Activated CD4-positive, alpha-beta memory T cell treated with anti-CD3 and anti-CD28 coated beads for 36 hours (primary cell): ENCODE measurements at regions of chr20 and their contacts with region 1.

Region 1: GRCh38 chr20:57622579-57623377 is 2.6 kb upstream of the ZBP1 start:
- DNase-seq: peak; percentile 85
- H3K4me3 Mint-ChIP-seq: no peak overlapping the region
- H3K27ac Mint-ChIP-seq: peak overlapping the region; percentile 53
- H3K4me1 Mint-ChIP-seq: peaks cover 64% of the 10 kb centered on the region
- H3K27me3 Mint-ChIP-seq: peaks cover 2% of the 10 kb centered on the region

Region 2: DNA sequence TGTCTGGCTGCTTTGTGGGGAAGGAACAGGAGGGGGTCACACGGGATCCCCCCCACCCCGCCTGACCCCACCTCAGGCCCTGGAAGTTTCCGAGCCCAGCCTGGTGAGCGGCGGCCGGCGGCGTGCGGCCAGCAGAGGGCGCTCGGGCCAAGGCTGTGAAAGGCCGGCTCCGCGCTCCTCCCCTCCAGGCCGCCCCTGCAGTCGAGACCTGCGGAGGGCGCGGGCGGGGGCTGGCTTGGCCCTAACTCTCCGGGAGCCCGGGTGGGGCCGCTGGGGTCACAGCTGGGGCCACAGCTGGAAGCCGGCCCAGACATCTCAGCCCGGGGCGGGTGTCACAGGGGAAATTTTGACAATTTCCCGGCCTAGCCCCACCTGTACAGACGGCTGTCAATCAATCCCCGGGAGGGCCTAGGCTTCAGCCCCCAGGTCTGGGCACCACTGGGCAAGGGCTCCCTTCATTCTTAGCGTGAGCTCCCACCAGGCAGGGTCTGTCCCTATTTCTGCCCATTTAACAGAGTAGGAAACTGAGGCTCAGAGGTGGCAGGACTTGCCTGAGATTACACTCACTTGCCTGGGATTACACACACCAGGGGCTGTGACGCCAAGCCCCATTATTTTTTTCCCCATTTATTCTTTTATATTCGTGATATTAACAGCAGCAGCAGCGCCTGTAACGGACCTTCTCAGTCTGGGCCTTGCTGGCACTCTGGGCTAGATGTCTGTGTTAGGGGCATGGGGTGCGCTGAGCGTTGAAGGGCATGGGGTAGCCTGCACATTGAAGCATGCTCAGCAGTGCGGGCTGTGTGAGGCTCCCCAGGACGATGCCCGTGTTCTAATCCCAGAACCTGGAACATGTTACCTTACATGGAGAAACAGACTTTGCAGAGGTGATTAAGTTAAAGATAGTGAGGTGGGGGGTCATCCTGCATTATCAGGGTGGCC is 25.5 kb before region 1 on chr20:
- CTCF ChIA-PET with region 1: interaction called, 27 read pairs
- POLR2A ChIA-PET with region 1: interaction called, 4 read pairs
- intact Hi-C with region 1: no loop called
- DNase-seq: peak; percentile 75
- H3K4me3 Mint-ChIP-seq: no peak overlapping the region
- H3K27ac Mint-ChIP-seq: no peak overlapping the region
- H3K4me1 Mint-ChIP-seq: peaks cover 2% of the 10 kb centered on the region
- H3K27me3 Mint-ChIP-seq: peaks cover 5% of the 10 kb centered on the region

Region 3: GRCh38 chr20:57638173-57638894 is 15.6 kb after region 1 on chr20:
- CTCF ChIA-PET with region 1: interaction called, 11 read pairs
- POLR2A ChIA-PET with region 1: no interaction called
- intact Hi-C with region 1: loop called (anchors 2 kb)
- DNase-seq: no peak
- H3K4me3 Mint-ChIP-seq: no peak overlapping the region
- H3K27ac Mint-ChIP-seq: no peak overlapping the region
- H3K4me1 Mint-ChIP-seq: peaks cover 15% of the 10 kb centered on the region
- H3K27me3 Mint-ChIP-seq: peaks cover 11% of the 10 kb centered on the region

Region 4: GRCh38 chr20:57698117-57698866 is 75.5 kb after region 1 on chr20:
- CTCF ChIA-PET with region 1: interaction called, 7 read pairs
- POLR2A ChIA-PET with region 1: no interaction called
- intact Hi-C with region 1: loop called (anchors 1 kb)
- DNase-seq: peak; percentile 89
- H3K4me3 Mint-ChIP-seq: peak overlapping the region; percentile 32
- H3K27ac Mint-ChIP-seq: peak overlapping the region; percentile 84
- H3K4me1 Mint-ChIP-seq: peaks cover 41% of the 10 kb centered on the region
- H3K27me3 Mint-ChIP-seq: peaks cover 2% of the 10 kb centered on the region

Region 5: GRCh38 chr20:58179432-58180099 is 556.8 kb after region 1 on chr20:
- CTCF ChIA-PET with region 1: interaction called, 10 read pairs
- POLR2A ChIA-PET with region 1: no interaction called
- intact Hi-C with region 1: no loop called
- DNase-seq: peak; percentile 70
- H3K4me3 Mint-ChIP-seq: no peak overlapping the region
- H3K27ac Mint-ChIP-seq: no peak overlapping the region
- H3K4me1 Mint-ChIP-seq: peaks cover 3% of the 10 kb centered on the region
- H3K27me3 Mint-ChIP-seq: peaks cover 13% of the 10 kb centered on the region